Prostate gland (tissue), 2 donors: ENCODE measurements at regions of chr1 and their contacts with region 1.

Region 1: DNA sequence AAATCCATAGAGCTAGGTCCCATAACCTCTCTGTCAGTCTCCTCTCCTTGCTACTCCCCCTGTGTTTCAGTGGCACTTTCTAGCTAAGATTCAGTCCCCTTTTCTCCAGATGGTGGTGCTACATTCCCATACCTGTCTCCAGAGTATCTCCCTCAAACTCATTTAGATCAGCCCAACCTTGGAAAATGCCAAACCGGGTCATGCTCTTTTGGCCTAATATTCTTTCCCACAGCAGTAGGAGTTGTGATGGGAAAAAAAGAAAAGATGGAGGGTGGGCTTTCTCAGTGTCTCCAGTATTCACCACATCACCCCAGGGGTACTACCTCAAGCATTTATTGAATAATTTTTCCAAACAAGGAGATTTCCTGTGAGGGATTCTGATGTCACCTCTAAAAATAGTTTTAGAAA is 3.2 kb upstream of the RXFP4 start:
- DNase-seq: peak; percentile 37
- H3K4me3 ChIP-seq: no peak overlapping the region
- H3K27ac ChIP-seq: no peak overlapping the region
- H3K4me1 ChIP-seq: no peaks in the 10 kb centered on the region
- H3K27me3 ChIP-seq: no peaks in the 10 kb centered on the region
- CTCF ChIP-seq: peak; percentile 17 to 73 (median 52)
- POLR2A ChIP-seq: no peak

Region 2: DNA sequence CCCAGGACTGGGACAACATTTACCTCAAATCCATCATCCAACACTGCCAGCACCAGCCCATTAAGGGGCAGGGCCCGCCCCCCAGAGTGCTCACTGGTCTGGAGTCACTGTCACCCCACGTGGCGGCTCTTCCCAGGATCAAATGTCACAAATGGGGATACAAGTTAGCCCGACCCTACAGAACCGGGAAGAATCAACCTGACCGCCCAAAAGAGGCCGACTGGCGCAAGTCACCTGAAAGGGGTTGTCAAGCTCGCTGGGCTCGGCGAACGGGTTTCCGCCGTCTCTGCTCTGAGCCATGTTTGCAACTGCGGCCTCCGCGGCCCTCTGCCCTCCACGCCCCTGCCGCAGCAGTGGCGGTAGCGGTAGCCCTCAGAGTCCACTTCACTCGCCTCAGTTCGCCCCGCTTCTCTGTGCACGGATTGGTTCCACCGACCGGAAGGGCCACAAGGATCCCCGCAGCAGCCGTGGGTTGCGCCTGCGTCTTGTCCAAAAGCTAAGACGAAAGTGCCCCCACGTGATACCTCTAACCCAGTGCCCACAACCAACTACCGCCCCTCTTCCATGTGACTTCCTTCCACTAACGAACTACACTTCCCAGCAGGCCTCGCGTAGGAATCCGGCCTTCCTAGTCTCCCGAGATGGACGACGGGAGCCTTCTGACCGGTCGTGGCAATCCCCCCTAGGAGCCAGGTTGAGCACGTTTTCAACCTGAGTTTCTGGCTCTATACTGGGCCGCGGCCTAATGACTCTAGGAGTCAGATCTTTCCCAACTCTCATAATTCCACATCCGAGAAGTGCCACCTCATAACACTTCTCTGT is 676.2 kb before region 1 on chr1 and contains the start of gene SCAMP3:
- intact Hi-C with region 1: no loop called
- DNase-seq: peak; percentile 98
- H3K4me3 ChIP-seq: peak within 1 kb of the TSS; percentile 65 to 68
- H3K27ac ChIP-seq: peak within 1 kb of the TSS; percentile 72 to 79
- H3K4me1 ChIP-seq: no peaks in the 10 kb centered on the region
- H3K27me3 ChIP-seq: no peaks in the 10 kb centered on the region
- CTCF ChIP-seq: no peak
- POLR2A ChIP-seq: peak; percentile 58
- total RNA-seq, gene SCAMP3: 84.1 to 97.8 TPM

Region 3: GRCh38 chr1:155989242-155990004 is 51.2 kb after region 1 on chr1:
- intact Hi-C with region 1: loop called (anchors 2 kb)
- DNase-seq: peak; percentile 43
- H3K4me3 ChIP-seq: peak overlapping the region; percentile 10 to 12
- H3K27ac ChIP-seq: no peak overlapping the region
- H3K4me1 ChIP-seq: no peaks in the 10 kb centered on the region
- H3K27me3 ChIP-seq: no peaks in the 10 kb centered on the region
- CTCF ChIP-seq: peak; percentile 92 to 98 (median 94)
- POLR2A ChIP-seq: no peak